Activated CD4-positive, alpha-beta memory T cell treated with anti-CD3 and anti-CD28 coated beads, Interleukin-2, amount 10 ng/mL, durations not matched to agents 7 days and 5 days (primary cell): ENCODE measurements at regions of chr1 and their contacts with region 1.

Region 1: DNA sequence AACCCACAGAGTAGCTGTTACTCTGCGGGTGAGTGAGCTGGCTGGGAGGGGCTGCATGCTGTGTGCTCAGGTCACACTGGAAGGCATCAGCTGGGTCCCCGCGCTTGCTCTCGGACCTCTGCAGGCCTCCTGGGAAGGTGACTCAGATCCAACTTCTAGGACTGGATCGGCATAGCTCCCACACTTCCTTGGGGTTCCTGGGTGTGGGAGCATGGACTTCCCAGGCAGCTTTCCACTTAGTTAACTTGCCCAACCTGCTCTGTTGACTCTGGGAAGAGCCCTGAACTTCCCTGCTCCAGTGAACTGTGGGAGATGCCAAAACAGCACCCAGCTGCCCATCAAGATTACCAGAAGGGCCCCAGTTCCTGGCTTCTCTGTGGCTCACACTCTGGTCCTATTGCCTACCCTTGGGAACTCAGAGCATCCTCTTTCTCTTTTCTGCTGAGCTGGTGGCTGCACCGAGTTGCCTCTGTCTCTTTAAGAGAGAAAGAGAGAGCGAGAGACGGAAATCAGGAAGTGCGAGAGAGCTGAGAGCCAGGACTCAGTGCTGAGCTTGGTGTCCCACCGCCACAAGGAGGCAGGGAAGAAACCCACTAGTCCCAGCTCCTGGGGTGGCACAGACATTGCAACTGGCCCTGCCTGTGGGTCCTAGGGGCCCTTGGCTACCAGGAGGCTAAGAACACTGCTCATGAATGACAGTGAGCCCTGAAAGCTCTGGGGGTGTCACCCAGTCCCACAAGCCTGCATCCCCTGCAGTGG is at the start of gene IKBKE:
- DNase-seq: peak; percentile 72
- H3K4me3 Mint-ChIP-seq: peak within 1 kb of the TSS; percentile 93
- H3K27ac Mint-ChIP-seq: peak within 1 kb of the TSS; percentile 77
- H3K4me1 Mint-ChIP-seq: peaks cover 86% of the 10 kb centered on the region
- H3K27me3 Mint-ChIP-seq: no peaks in the 10 kb centered on the region
- total RNA-seq, gene IKBKE: 61.8 to 63.6 TPM

Region 2: DNA sequence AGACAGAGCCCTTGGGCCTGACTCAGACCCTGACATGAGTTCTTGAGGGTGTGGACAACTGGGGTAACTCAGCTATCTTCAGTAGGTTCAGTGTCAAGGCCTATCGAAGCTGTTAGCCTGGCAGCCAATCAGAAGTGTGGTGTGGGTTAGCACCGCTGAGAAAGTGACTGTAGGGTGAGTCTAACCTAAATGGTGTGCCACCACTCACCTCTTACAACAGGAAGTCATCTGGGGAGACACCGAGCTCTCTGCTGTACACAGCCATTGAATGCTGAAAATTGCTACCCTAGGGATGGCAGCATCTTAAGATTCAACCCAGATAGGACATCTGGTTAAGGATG is 81.8 kb after region 1 on chr1:
- CTCF ChIA-PET with region 1: interaction called, 14 read pairs
- POLR2A ChIA-PET with region 1: interaction called, 5 read pairs
- DNase-seq: peak; percentile 88
- H3K4me3 Mint-ChIP-seq: peak overlapping the region; percentile 57
- H3K27ac Mint-ChIP-seq: peak overlapping the region; percentile 86
- H3K4me1 Mint-ChIP-seq: peaks cover 62% of the 10 kb centered on the region
- H3K27me3 Mint-ChIP-seq: no peaks in the 10 kb centered on the region

Region 3: GRCh38 chr1:206575165-206575893 is 105.2 kb after region 1 on chr1:
- CTCF ChIA-PET with region 1: interaction called, 7 read pairs
- POLR2A ChIA-PET with region 1: interaction called, 11 read pairs
- DNase-seq: peak; percentile 72
- H3K4me3 Mint-ChIP-seq: peak overlapping the region; percentile 56
- H3K27ac Mint-ChIP-seq: peak overlapping the region; percentile 90
- H3K4me1 Mint-ChIP-seq: peaks cover 99% of the 10 kb centered on the region
- H3K27me3 Mint-ChIP-seq: no peaks in the 10 kb centered on the region